Heart left ventricle (tissue), 16 donors: ENCODE measurements at regions of chr9 and their contacts with region 1.

Region 1: GRCh38 chr9:18976709-18977531 is 56.1 kb downstream of the SAXO1 start:
- DNase-seq: no peak
- ATAC-seq: no peak
- H3K4me3 ChIP-seq: peak overlapping the region in 6 of 12 donors; percentile 1 to 23 (median 13)
- H3K27ac ChIP-seq: no peak overlapping the region
- H3K4me1 ChIP-seq: peaks cover 0 to 30% (median 4%) of the 10 kb centered on the region in 12 donors
- H3K27me3 ChIP-seq: no peaks in the 10 kb centered on the region
- CTCF ChIP-seq: no peak
- POLR2A ChIP-seq: no peak

Region 2: DNA sequence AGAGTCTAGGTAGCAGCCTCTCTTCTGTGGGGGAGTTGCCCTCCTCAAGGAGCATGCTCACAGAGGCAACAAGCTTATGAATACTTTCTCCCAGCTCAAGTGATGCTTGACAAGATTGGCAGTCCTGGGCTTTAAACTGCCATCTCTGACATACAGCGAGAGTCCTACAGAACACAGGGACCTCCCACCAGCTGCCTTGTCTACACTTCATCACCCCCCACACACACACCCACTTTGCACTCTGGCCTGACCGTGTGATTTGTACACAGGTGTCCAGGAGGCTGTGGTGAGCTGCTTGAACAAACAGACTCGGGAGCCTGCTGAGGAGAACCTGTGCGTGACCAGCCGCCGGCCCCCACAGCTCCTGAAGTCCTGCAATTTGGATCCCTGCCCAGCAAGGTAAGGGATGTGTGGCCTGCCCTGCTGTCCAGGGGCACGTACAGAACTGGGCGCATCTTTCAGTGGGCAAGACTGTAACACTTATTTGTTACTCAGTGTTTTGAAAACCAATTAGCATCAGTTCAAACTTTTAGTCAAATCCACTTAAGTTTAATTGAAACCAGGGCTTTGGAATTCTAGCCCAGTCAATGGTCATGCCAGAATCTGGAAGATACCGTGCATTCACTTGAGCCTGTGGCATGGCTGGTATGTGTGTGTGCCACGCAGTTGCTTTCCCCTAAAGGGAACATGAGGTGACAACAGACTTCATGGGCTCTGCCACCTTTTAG is 255.5 kb before region 1 on chr9:
- intact Hi-C with region 1: loop called in 1 of 10 experiments (anchors 10 kb)
- DNase-seq: no peak
- ATAC-seq: peak in 2 of 4 donors; percentile 81 to 82
- H3K4me3 ChIP-seq: no peak overlapping the region
- H3K27ac ChIP-seq: no peak overlapping the region
- H3K4me1 ChIP-seq: peaks cover 0 to 8% (median 0%) of the 10 kb centered on the region in 12 donors
- H3K27me3 ChIP-seq: no peaks in the 10 kb centered on the region
- CTCF ChIP-seq: no peak
- POLR2A ChIP-seq: no peak